ENCODE measurements at regions of chr4 and their contacts with region 1.

Region 1: DNA sequence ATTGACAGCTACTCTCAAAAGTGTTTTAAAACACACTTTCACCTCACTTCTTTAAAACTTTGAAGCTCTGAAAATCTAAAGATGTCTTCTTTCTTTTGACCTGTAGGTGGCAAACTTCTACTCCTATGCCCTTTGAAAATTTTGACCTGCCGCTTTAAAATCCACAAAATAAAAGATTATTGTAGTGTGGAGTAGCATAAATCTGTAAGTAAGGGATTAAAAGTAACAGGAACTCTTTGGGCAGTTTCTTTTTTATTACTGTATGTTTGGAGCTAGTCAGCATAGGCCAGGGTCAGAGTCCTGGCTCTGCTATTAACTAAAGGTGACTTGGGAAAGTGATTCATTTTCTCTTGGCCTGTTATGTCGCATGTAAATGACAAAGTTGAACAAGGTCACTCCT is 25.5 kb downstream of the BBS12 start:
- DNase-seq: peak; percentile 53
- ATAC-seq: no peak
- H3K4me3 ChIP-seq: no peak overlapping the region
- H3K4me3 Mint-ChIP-seq: no peak overlapping the region
- H3K27ac ChIP-seq: no peak overlapping the region
- H3K27ac Mint-ChIP-seq: no peak overlapping the region
- H3K4me1 ChIP-seq: peaks cover 8 to 11% of the 10 kb centered on the region in 2 donors
- H3K4me1 Mint-ChIP-seq: peaks cover 15% of the 10 kb centered on the region
- H3K27me3 ChIP-seq: no peaks in the 10 kb centered on the region
- H3K27me3 Mint-ChIP-seq: peaks cover 22% of the 10 kb centered on the region
- CTCF ChIP-seq: peak; percentile 96

Region 2: GRCh38 chr4:122914292-122914904 is 156.4 kb after region 1 on chr4:
- CTCF ChIA-PET with region 1: interaction called, 65 read pairs
- POLR2A ChIA-PET with region 1: no interaction called
- intact Hi-C with region 1: loop called (anchors 1 kb)
- DNase-seq: no peak
- ATAC-seq: no peak
- H3K4me3 ChIP-seq: no peak overlapping the region
- H3K4me3 Mint-ChIP-seq: no peak overlapping the region
- H3K27ac ChIP-seq: no peak overlapping the region
- H3K27ac Mint-ChIP-seq: no peak overlapping the region
- H3K4me1 ChIP-seq: no peaks in the 10 kb centered on the region
- H3K4me1 Mint-ChIP-seq: no peaks in the 10 kb centered on the region
- H3K27me3 ChIP-seq: no peaks in the 10 kb centered on the region
- H3K27me3 Mint-ChIP-seq: no peaks in the 10 kb centered on the region
- CTCF ChIP-seq: peak; percentile 59

Region 3: DNA sequence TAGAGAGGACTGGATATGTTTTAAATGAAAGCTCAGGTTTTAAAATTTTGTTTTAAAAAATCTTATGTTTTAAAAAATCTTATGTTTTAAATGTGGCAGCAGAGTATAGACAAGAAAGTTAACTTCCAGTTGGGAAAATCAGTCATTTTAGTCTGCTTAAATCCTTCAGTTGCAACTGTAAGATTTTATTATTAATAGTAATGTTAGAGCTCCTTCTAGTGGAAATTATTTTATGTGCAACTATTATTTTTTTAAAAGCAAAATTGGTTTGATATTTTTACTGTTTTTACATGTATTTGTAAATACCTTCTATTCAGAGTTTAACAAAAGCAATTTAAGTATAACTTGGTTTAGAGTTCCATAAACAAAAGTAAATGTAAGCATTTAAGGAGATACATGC is 172.8 kb after region 1 on chr4:
- CTCF ChIA-PET with region 1: interaction called, 71 read pairs
- POLR2A ChIA-PET with region 1: no interaction called
- intact Hi-C with region 1: loop called (anchors 1 kb)
- DNase-seq: peak; percentile 27
- ATAC-seq: no peak
- H3K4me3 ChIP-seq: no peak overlapping the region
- H3K4me3 Mint-ChIP-seq: no peak overlapping the region
- H3K27ac ChIP-seq: no peak overlapping the region
- H3K27ac Mint-ChIP-seq: no peak overlapping the region
- H3K4me1 ChIP-seq: no peaks in the 10 kb centered on the region
- H3K4me1 Mint-ChIP-seq: no peaks in the 10 kb centered on the region
- H3K27me3 ChIP-seq: no peaks in the 10 kb centered on the region
- H3K27me3 Mint-ChIP-seq: no peaks in the 10 kb centered on the region
- CTCF ChIP-seq: peak; percentile 78

Region 4: GRCh38 chr4:124322234-124323065 is 1564.4 kb after region 1 on chr4:
- CTCF ChIA-PET with region 1: no interaction called
- POLR2A ChIA-PET with region 1: no interaction called
- intact Hi-C with region 1: loop called (anchors 2 kb)
- DNase-seq: peak; percentile 30
- ATAC-seq: no peak
- H3K4me3 ChIP-seq: no peak overlapping the region
- H3K4me3 Mint-ChIP-seq: no peak overlapping the region
- H3K27ac ChIP-seq: no peak overlapping the region
- H3K27ac Mint-ChIP-seq: no peak overlapping the region
- H3K4me1 ChIP-seq: no peaks in the 10 kb centered on the region
- H3K4me1 Mint-ChIP-seq: no peaks in the 10 kb centered on the region
- H3K27me3 ChIP-seq: no peaks in the 10 kb centered on the region
- H3K27me3 Mint-ChIP-seq: no peaks in the 10 kb centered on the region
- CTCF ChIP-seq: peak; percentile 84